ENCODE measurements at regions of chr1 and their contacts with region 1.

Region 1: GRCh38 chr1:115595279-115596079 is 46.3 kb upstream of the VANGL1 start:
- DNase-seq: peak; percentile 59
- H3K4me3 ChIP-seq: no peak overlapping the region
- H3K27ac ChIP-seq: no peak overlapping the region
- H3K4me1 ChIP-seq: no peaks in the 10 kb centered on the region
- CTCF ChIP-seq: peak; percentile 90

Region 2: DNA sequence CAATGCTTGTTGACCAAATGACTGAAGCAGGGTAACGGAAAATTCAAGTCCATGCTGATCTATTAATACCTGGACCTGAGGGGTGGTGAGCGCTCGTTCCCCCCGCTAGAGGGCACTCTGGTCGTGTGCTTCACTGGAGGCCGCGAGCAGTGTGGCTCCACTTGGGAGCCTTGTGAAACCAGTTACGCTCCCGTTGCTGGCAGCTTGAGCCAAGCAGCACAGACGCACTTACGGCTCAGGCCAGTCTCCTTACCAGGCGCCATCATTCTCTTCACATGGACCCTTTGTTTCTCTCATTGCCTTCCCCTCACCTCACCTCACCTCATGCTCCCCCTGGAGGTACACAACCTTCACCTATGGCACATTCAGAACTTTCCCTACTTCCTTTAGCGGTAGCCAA is 456.5 kb before region 1 on chr1:
- CTCF ChIA-PET with region 1: interaction called, 3 read pairs
- POLR2A ChIA-PET with region 1: no interaction called
- intact Hi-C with region 1: loop called (anchors 1 kb)
- DNase-seq: peak; percentile 71
- H3K4me3 ChIP-seq: no peak overlapping the region
- H3K27ac ChIP-seq: no peak overlapping the region
- H3K4me1 ChIP-seq: no peaks in the 10 kb centered on the region
- CTCF ChIP-seq: peak; percentile 92

Region 3: DNA sequence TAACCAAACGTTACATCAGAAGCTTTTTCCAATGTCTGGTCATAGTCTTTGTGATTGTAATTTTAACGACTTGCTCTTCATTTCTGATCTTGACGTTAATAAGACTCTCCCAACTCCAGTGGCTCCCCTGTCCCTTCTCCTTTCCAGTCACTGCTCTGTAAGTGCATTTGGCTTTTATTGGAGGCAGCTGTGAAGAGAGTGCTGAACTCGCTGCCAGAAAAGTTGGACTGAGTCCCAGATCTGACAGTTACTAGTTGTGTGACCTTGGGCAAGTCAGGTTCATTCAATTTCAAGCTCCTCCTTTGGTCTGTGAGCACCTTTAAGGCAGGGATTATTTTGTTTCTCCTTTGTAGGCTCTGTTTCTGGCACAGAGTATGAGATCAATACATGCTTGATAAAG is 396.5 kb before region 1 on chr1:
- CTCF ChIA-PET with region 1: no interaction called
- POLR2A ChIA-PET with region 1: no interaction called
- intact Hi-C with region 1: loop called (anchors 5 kb)
- DNase-seq: no peak
- H3K4me3 ChIP-seq: no peak overlapping the region
- H3K27ac ChIP-seq: no peak overlapping the region
- H3K4me1 ChIP-seq: no peaks in the 10 kb centered on the region
- CTCF ChIP-seq: no peak

Region 4: GRCh38 chr1:115545791-115546733 is 49.4 kb before region 1 on chr1:
- CTCF ChIA-PET with region 1: no interaction called
- POLR2A ChIA-PET with region 1: no interaction called
- intact Hi-C with region 1: no loop called
- DNase-seq: no peak
- H3K4me3 ChIP-seq: no peak overlapping the region
- H3K27ac ChIP-seq: no peak overlapping the region
- H3K4me1 ChIP-seq: no peaks in the 10 kb centered on the region
- CTCF ChIP-seq: peak; percentile 43; the same call in 1 of the 2 replicates

Region 5: DNA sequence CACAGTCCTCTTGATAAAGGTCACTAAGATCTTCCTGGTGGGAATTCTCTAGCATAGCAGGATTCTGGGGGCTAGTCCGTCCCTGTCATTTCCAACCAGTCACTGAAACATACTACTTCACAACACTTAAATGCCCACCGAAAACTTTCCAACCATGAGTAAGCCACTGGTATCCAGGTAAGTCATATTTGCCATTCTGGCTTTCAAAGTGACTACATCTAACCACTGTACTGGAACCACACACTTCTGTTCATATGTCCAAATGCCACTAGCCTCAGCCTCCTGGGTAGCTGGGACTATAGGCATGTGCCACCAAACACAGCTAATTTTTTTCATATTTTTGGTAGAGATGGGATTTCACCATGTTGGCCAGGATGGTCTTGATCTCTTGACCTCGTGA is 18.0 kb before region 1 on chr1:
- CTCF ChIA-PET with region 1: no interaction called
- POLR2A ChIA-PET with region 1: no interaction called
- intact Hi-C with region 1: no loop called
- DNase-seq: no peak
- H3K4me3 ChIP-seq: no peak overlapping the region
- H3K27ac ChIP-seq: no peak overlapping the region
- H3K4me1 ChIP-seq: no peaks in the 10 kb centered on the region
- CTCF ChIP-seq: no peak

Region 6: GRCh38 chr1:115632251-115633026 is 37.0 kb after region 1 on chr1:
- CTCF ChIA-PET with region 1: no interaction called
- POLR2A ChIA-PET with region 1: no interaction called
- intact Hi-C with region 1: no loop called
- DNase-seq: no peak
- H3K4me3 ChIP-seq: no peak overlapping the region
- H3K27ac ChIP-seq: no peak overlapping the region
- H3K4me1 ChIP-seq: no peaks in the 10 kb centered on the region
- CTCF ChIP-seq: no peak

Region 7: GRCh38 chr1:115727706-115728249 is 132.3 kb after region 1 on chr1:
- CTCF ChIA-PET with region 1: no interaction called
- POLR2A ChIA-PET with region 1: no interaction called
- intact Hi-C with region 1: no loop called
- DNase-seq: no peak
- H3K4me3 ChIP-seq: no peak overlapping the region
- H3K27ac ChIP-seq: no peak overlapping the region
- H3K4me1 ChIP-seq: no peaks in the 10 kb centered on the region
- CTCF ChIP-seq: no peak

Measured in OCI-LY7 (cell line).